Activated naive CD4-positive, alpha-beta T cell treated with anti-CD3 and anti-CD28 coated beads for 36 hours (primary cell): ENCODE measurements at regions of chr11 and their contacts with region 1.

Region 1: DNA sequence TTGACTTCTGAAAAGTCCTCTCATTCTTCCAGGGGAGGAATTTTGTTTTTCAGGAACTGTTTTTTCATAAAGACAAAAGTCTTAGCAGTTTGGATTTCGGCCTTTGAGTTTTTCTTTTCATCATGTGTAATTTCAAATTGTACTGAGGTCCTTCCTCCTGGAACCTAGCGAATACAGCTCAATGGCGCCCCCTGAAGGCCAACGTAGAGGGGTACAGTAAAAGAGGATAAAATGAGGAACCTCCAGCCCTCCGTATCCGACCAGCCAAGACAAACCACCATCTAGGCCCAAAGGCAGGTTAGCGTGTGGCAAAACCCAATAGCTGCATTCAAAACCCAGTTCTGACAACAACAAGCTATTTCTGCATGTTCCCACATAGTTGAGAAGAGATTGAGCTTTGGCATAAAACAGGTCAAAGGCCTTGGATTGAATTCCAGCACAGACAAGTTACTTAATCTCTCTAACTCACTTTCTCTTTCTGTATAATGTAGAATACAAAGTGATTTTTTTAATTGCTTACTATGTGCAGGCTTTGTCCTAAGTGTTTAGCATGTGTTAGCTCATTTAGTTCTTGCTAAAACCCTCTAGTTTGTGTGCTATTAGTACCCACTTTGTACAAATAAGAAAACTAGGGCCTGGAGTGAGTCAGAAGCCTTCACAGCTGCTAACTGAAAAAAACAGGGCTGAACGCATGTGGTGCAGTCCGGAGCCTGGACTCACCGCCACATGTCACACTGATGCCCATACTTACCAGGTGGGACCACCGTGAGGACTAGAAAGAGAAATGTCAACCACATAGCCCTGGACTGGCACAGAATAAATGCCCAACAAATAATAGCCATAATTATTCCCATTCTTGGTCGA is 43.2 kb upstream of the ETS1 start:
- DNase-seq: peak; percentile 97
- H3K4me3 Mint-ChIP-seq: peak overlapping the region; percentile 60
- H3K27ac Mint-ChIP-seq: peak overlapping the region; percentile 84
- H3K4me1 Mint-ChIP-seq: peaks cover 59% of the 10 kb centered on the region
- H3K27me3 Mint-ChIP-seq: no peaks in the 10 kb centered on the region

Region 2: DNA sequence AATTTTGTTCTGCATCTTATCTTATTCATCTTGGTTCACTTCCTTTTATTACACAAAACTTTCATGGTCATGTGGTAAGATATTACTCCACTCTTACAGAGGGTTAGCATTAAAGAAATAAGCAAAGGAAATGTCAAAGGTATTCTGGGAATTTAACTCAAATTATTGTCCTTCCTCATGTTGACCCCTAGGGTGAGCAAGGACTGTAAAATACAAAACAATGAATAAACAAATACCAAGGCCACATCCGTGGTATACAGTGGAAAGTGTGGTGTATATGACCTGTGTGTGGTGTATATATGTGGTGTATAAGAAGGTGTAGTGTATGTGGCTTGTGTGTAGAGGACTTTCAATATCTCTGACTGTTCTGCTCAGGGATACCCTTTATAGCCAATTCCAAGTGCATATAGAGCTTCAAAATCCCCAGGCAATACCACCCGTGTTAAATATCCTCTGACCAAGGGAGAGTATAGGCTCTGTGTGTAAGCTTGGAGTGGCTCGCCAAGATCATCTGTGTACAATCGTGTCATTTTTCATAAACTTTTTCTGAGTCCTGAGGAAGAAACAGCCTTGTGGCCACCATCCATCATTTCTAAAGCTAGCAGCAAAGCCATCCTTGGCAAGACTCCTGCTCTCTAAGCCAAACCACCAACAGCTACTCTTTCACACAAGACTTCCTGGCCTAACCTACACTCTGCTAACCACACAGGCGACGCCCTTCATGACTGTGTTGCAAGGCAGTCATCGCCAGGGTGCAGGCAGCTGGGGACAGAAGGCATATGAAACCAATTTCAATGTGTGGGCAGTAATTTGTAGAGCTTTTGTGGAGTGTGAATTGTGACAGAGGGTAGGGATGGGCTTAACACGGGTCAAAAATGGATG is 591.2 kb before region 1 on chr11:
- CTCF ChIA-PET with region 1: interaction called, 5 read pairs
- intact Hi-C with region 1: loop called (anchors 2 kb)
- DNase-seq: peak; percentile 89
- H3K4me3 Mint-ChIP-seq: peak overlapping the region; percentile 40
- H3K27ac Mint-ChIP-seq: peak overlapping the region; percentile 92
- H3K4me1 Mint-ChIP-seq: peaks cover 47% of the 10 kb centered on the region
- H3K27me3 Mint-ChIP-seq: no peaks in the 10 kb centered on the region

Region 3: GRCh38 chr11:128238521-128239265 is 391.9 kb before region 1 on chr11:
- CTCF ChIA-PET with region 1: interaction called, 4 read pairs
- intact Hi-C with region 1: loop called (anchors 2 kb)
- DNase-seq: no peak
- H3K4me3 Mint-ChIP-seq: peak overlapping the region; percentile 41
- H3K27ac Mint-ChIP-seq: peak overlapping the region; percentile 55
- H3K4me1 Mint-ChIP-seq: peaks cover 31% of the 10 kb centered on the region
- H3K27me3 Mint-ChIP-seq: no peaks in the 10 kb centered on the region

Region 4: GRCh38 chr11:128465946-128466705 is 164.5 kb before region 1 on chr11:
- CTCF ChIA-PET with region 1: interaction called, 40 read pairs
- intact Hi-C with region 1: no loop called
- DNase-seq: peak; percentile 74
- H3K4me3 Mint-ChIP-seq: peak overlapping the region; percentile 74
- H3K27ac Mint-ChIP-seq: peak overlapping the region; percentile 97
- H3K4me1 Mint-ChIP-seq: peaks cover 94% of the 10 kb centered on the region
- H3K27me3 Mint-ChIP-seq: no peaks in the 10 kb centered on the region

Region 5: GRCh38 chr11:128530118-128531074 is 100.2 kb before region 1 on chr11:
- CTCF ChIA-PET with region 1: interaction called, 59 read pairs
- intact Hi-C with region 1: loop called (anchors 1 kb)
- DNase-seq: no peak
- H3K4me3 Mint-ChIP-seq: no peak overlapping the region
- H3K27ac Mint-ChIP-seq: no peak overlapping the region
- H3K4me1 Mint-ChIP-seq: peaks cover 69% of the 10 kb centered on the region
- H3K27me3 Mint-ChIP-seq: no peaks in the 10 kb centered on the region

Region 6: GRCh38 chr11:128757235-128757711 is 126.7 kb after region 1 on chr11:
- CTCF ChIA-PET with region 1: interaction called, 21 read pairs
- intact Hi-C with region 1: loop called (anchors 1 kb)
- DNase-seq: peak; percentile 85
- H3K4me3 Mint-ChIP-seq: peak overlapping the region; percentile 14
- H3K27ac Mint-ChIP-seq: peak overlapping the region; percentile 86
- H3K4me1 Mint-ChIP-seq: peaks cover 74% of the 10 kb centered on the region
- H3K27me3 Mint-ChIP-seq: no peaks in the 10 kb centered on the region

Region 7: DNA sequence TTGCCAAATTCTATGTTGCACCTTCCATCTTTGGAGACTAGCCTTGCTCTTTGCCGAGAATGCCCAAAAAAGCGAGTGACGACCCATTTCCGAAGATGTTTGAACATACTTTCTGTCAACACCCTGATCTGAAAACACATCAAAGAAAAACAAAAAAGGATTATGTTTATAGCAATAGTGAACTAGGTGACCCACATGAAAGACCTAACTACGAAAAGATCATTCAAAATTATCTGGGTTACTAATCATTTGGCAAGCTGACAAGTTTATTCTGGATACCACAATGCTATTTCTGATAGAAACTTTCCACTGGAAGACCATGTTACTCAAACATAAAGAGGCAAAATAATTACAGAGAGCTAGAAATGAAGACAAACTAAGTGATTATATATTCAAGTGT is 209.5 kb after region 1 on chr11:
- CTCF ChIA-PET with region 1: no interaction called
- intact Hi-C with region 1: no loop called
- DNase-seq: no peak
- H3K4me3 Mint-ChIP-seq: no peak overlapping the region
- H3K27ac Mint-ChIP-seq: no peak overlapping the region
- H3K4me1 Mint-ChIP-seq: peaks cover 33% of the 10 kb centered on the region
- H3K27me3 Mint-ChIP-seq: no peaks in the 10 kb centered on the region

Region 8: DNA sequence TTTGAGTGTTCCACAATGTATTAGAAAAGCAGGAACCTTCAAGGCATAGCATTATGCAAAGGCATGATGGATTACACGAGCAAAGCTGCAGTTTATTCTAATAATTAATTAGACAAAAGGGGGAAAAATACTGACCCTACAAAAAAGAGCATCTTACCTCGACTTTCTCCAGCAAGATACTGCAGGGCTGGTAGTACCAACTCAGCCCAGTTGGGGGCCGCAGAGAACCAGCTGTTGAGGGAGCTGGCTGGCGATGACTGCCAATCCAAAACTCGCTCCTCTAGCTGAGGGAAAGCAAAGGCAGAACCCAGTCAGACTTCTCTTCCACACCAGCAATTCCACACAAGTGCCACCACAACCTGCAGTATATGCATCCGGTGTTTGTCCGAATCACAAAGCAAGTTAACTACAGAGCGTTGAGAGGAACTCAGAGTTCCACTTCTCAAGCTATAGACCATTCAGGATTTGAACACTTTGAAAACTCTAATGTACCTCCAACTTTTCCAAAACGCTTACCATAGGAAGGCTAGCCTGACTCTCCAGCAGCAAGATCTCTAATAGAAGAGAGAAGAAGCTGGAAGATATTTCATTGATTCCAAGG is 1251.1 kb after region 1 on chr11:
- CTCF ChIA-PET with region 1: no interaction called
- intact Hi-C with region 1: no loop called
- DNase-seq: peak; percentile 62
- H3K4me3 Mint-ChIP-seq: no peak overlapping the region
- H3K27ac Mint-ChIP-seq: no peak overlapping the region
- H3K4me1 Mint-ChIP-seq: no peaks in the 10 kb centered on the region
- H3K27me3 Mint-ChIP-seq: no peaks in the 10 kb centered on the region